ENCODE measurements at regions of chr4 and their contacts with region 1.

Region 1: DNA sequence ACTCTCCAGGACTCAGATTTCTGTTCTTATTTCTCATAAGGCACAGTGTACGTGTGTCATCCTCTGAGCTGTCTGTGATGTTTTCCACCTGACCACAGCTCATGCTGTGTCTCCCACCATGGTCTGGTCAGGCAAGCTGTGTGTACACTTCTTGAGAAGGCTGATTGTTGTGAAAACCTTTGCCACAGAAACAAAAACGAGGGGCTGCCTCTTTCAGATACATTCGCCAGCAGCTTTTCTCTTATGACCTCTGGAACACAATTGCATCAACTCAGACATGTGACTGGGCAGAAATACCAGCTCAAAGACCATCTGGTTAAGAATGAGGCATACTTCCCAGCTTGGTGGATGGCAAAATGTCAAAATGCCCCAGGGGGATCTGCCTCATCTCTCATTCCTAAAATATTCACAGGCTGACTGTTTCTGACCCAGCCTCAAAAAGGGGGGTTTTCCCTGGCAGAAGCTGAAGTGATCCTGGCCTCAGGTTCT is 46.1 kb downstream of the PGRMC2 start:
- DNase-seq: peak; percentile 98
- H3K4me3 ChIP-seq: no peak overlapping the region
- CTCF ChIP-seq: no peak

Region 2: DNA sequence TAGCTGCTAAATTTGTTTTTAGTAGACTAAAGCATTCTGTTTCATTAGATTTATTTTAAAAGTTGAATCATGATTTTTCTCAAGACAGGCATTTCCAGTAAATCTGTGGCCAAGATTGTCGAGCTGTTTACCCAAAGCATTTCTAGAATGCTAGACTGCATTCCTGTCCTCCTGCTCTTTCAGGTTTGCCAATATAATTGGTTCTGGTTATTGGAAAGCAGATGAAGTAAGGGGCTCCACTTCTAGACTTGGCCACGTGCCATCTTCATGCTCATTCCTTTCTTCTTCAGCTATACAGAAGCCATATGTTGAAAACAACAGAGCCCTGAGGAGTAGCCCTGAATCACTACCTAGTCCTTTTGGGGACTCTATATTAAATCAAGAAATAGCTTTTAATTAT is 16.3 kb before region 1 on chr4:
- CTCF ChIA-PET with region 1: interaction called, 4 read pairs
- POLR2A ChIA-PET with region 1: interaction called, 12 read pairs
- DNase-seq: peak; percentile 89
- H3K4me3 ChIP-seq: no peak overlapping the region
- CTCF ChIP-seq: no peak

Region 3: GRCh38 chr4:128844931-128845330 is 603.5 kb after region 1 on chr4:
- CTCF ChIA-PET with region 1: no interaction called
- POLR2A ChIA-PET with region 1: no interaction called
- DNase-seq: no peak
- H3K4me3 ChIP-seq: no peak overlapping the region
- CTCF ChIP-seq: no peak

Measured in AG04449 (cell line).